GM12878 (cell line): ENCODE measurements at regions of chr1 and their contacts with region 1.

Region 1: GRCh38 chr1:82185084-82185483 is 384.4 kb downstream of the ADGRL2 start:
- DNase-seq: no peak
- ATAC-seq: no peak
- H3K4me3 ChIP-seq: no peak overlapping the region
- H3K27ac ChIP-seq: no peak overlapping the region
- H3K4me1 ChIP-seq: no peaks in the 10 kb centered on the region
- H3K27me3 ChIP-seq: no peaks in the 10 kb centered on the region
- CTCF ChIP-seq: no peak
- EP300 ChIP-seq: no peak
- POLR2A ChIP-seq: no peak
- RAD21 ChIP-seq: no peak

Region 2: DNA sequence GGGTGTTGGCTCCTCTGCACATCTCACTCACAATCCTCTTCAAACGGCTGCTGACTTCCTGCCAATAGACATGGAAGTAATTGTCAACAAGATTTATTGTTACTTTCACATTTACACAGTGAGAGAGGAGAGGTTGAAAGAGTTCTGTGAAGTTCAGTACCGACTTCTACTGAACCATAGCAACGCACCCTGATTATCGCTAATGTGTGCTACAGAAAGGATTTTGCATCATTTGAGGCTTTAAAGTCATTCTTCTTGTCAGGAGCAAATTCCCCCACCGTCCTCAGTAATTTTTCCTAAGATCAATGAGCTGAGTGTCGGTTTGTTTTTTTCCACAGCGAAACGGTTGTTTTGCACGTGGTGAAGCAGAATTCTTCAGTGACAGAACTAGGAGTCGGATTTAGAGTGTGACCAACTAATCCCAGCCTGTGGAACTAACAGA is 23.4 kb before region 1 on chr1:
- CTCF ChIA-PET with region 1: no interaction called
- POLR2A ChIA-PET with region 1: interaction called, 3 read pairs
- RAD21 ChIA-PET with region 1: interaction called, 3 read pairs
- SMC1A ChIA-PET with region 1: interaction called, 19 read pairs
- in situ Hi-C with region 1: no loop called
- intact Hi-C with region 1: no loop called
- DNase-seq: no peak
- ATAC-seq: peak; percentile 91
- H3K4me3 ChIP-seq: no peak overlapping the region
- H3K27ac ChIP-seq: no peak overlapping the region
- H3K4me1 ChIP-seq: no peaks in the 10 kb centered on the region
- H3K27me3 ChIP-seq: no peaks in the 10 kb centered on the region
- CTCF ChIP-seq: no peak
- EP300 ChIP-seq: peak in 1 of 2 experiments; percentile 25; a peak in 1 of 4 replicates
- POLR2A ChIP-seq: no peak
- RAD21 ChIP-seq: no peak

Region 3: GRCh38 chr1:82197606-82198005 is 12.5 kb after region 1 on chr1:
- CTCF ChIA-PET with region 1: interaction called, 6 read pairs
- POLR2A ChIA-PET with region 1: interaction called, 3 read pairs
- RAD21 ChIA-PET with region 1: no interaction called
- SMC1A ChIA-PET with region 1: interaction called, 13 read pairs
- in situ Hi-C with region 1: no loop called
- intact Hi-C with region 1: no loop called
- DNase-seq: no peak
- ATAC-seq: no peak
- H3K4me3 ChIP-seq: no peak overlapping the region
- H3K27ac ChIP-seq: no peak overlapping the region
- H3K4me1 ChIP-seq: no peaks in the 10 kb centered on the region
- H3K27me3 ChIP-seq: no peaks in the 10 kb centered on the region
- CTCF ChIP-seq: no peak
- EP300 ChIP-seq: no peak
- POLR2A ChIP-seq: no peak
- RAD21 ChIP-seq: no peak